ENCODE measurements at regions of chr16 and their contacts with region 1.

Region 1: GRCh38 chr16:57544119-57544653 is 1.7 kb downstream of the ADGRG5 start:
- DNase-seq: peak; percentile 64
- ATAC-seq: peak; percentile 79
- H3K4me3 Mint-ChIP-seq: peak overlapping the region; percentile 88
- H3K27ac Mint-ChIP-seq: peak overlapping the region; percentile 79
- H3K4me1 Mint-ChIP-seq: peaks cover 87% of the 10 kb centered on the region
- H3K27me3 Mint-ChIP-seq: no peaks in the 10 kb centered on the region
- CTCF ChIP-seq: no peak

Region 2: GRCh38 chr16:57349212-57350031 is 194.8 kb before region 1 on chr16:
- CTCF ChIA-PET with region 1: no interaction called
- POLR2A ChIA-PET with region 1: interaction called, 3 read pairs
- intact Hi-C with region 1: loop called (anchors 2 kb)
- DNase-seq: peak; percentile 51
- ATAC-seq: peak; percentile 99
- H3K4me3 Mint-ChIP-seq: peak overlapping the region; percentile 62
- H3K27ac Mint-ChIP-seq: peak overlapping the region; percentile 31
- H3K4me1 Mint-ChIP-seq: peaks cover 43% of the 10 kb centered on the region
- H3K27me3 Mint-ChIP-seq: peaks cover 8% of the 10 kb centered on the region
- CTCF ChIP-seq: no peak

Region 3: GRCh38 chr16:57447186-57447962 is 96.8 kb before region 1 on chr16 and contains the starts of genes CIAPIN1 and COQ9:
- CTCF ChIA-PET with region 1: no interaction called
- POLR2A ChIA-PET with region 1: interaction called, 19 read pairs
- intact Hi-C with region 1: no loop called
- DNase-seq: peak; percentile 82
- ATAC-seq: peak; percentile 98
- H3K4me3 Mint-ChIP-seq: peak within 1 kb of the TSS; percentile 91
- H3K27ac Mint-ChIP-seq: peak within 1 kb of the TSS; percentile 84
- H3K4me1 Mint-ChIP-seq: peaks cover 19% of the 10 kb centered on the region
- H3K27me3 Mint-ChIP-seq: no peaks in the 10 kb centered on the region
- CTCF ChIP-seq: no peak
- total RNA-seq, gene CIAPIN1: 47.1 and 52.3 TPM in 2 replicates
- total RNA-seq, gene COQ9: 30.4 and 34.1 TPM in 2 replicates

Region 4: DNA sequence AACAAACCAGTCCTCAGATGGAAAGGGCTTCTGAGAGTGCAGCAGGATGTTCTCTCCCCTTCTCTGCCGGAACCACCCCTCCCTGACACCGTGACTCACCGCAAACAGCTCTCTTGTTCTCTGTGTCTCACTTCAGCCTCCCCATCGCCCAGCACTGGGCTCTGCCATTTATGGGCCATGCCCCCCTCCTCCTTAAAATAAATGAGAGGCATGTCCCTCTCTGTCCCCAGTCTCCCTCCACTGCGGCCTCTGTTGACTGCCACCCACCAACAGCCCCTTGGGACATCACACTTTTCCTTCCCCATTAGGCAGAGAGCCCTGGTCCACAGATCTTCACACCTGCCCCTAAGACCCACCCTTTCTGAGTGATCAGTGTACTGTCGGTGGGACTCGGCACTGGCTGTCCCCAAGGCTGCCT is 14.1 kb before region 1 on chr16:
- CTCF ChIA-PET with region 1: interaction called, 3 read pairs
- POLR2A ChIA-PET with region 1: interaction called, 26 read pairs
- intact Hi-C with region 1: loop called (anchors 1 kb)
- DNase-seq: no peak
- ATAC-seq: peak; percentile 82
- H3K4me3 Mint-ChIP-seq: peak overlapping the region; percentile 67
- H3K27ac Mint-ChIP-seq: peak overlapping the region; percentile 86
- H3K4me1 Mint-ChIP-seq: peaks cover 69% of the 10 kb centered on the region
- H3K27me3 Mint-ChIP-seq: no peaks in the 10 kb centered on the region
- CTCF ChIP-seq: no peak

Region 5: GRCh38 chr16:57555831-57556230 is 11.6 kb after region 1 on chr16:
- CTCF ChIA-PET with region 1: interaction called, 3 read pairs
- POLR2A ChIA-PET with region 1: interaction called, 4 read pairs
- intact Hi-C with region 1: loop called (anchors 1 kb)
- DNase-seq: no peak
- ATAC-seq: no peak
- H3K4me3 Mint-ChIP-seq: no peak overlapping the region
- H3K27ac Mint-ChIP-seq: peak overlapping the region; percentile 43
- H3K4me1 Mint-ChIP-seq: peaks cover 68% of the 10 kb centered on the region
- H3K27me3 Mint-ChIP-seq: no peaks in the 10 kb centered on the region
- CTCF ChIP-seq: no peak